A673 (cell line): ENCODE measurements at regions of chr2 and their contacts with region 1.

Region 1: DNA sequence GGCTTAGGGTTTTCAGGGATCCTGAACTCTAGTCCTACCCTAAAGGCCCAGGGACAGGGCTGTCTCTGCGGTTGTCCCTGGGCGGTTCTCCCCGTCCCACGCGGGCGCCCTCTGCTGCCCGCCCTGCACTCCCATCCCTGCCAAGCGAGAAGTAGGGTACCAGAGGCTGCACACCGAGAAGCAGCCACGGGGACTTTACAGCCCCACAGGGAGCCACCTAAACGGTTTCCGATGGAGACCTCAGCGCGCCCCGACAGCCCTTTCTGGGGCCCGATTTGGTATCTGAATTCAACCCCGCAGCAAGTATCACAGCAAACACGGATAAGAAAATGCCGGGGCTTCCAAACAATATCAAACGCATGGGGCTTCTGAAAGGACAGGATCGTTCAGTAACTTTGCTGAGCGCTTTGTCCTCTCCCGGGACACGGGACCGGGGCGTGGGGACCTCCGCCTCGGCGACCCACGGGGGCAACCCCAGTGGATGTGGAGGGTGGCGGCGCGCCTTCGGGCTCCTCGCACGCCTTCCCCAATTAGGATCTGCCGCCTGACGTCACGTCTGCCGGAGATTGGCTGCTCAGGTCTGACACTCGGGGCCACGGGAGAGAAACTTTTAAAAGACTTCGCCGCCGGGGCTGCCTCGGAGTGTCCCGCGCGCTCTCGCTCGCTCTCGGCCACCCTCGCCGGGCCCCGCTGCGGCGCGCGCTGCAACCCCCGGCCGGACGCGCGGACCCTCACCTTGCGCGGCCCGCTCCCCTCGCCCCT is at the start of gene LTBP1:
- DNase-seq: peak; percentile 78
- H3K4me3 ChIP-seq: peak within 1 kb of the TSS; percentile 54
- H3K27ac ChIP-seq: no peak within 1 kb of the TSS
- H3K4me1 ChIP-seq: peaks cover 4% of the 10 kb centered on the region
- H3K27me3 ChIP-seq: peaks cover 43% of the 10 kb centered on the region
- CTCF ChIP-seq: peak; percentile 92
- total RNA-seq, gene LTBP1: 2.2 and 2.3 TPM in 2 replicates

Region 2: DNA sequence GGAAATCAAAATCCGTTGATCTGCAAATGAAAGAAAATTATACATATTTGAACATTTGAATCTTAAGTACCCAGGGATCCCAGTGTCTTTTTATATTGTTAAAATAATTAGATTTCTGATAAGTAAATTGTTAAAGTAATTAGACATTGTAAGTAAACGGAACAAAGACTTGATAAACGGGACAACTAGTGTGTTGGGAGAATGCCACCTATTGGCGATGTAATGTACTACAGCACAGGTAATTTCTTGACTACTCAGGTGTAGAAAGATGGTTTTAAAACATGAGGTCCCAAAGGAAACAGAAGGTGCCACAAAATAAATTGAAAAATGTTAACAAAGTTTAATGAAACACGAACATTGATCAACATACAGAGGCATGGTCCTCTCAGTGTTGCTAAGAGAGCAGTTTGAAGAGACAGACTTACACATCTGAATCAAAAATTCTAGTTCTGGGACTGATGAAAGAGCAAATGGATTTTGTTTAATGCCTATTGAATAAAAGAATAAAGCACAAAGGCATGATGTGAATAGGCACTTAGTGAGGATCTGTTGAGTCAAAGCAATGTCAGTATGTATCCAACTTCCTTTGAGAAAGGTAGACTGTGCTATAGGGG is 426.6 kb after region 1 on chr2:
- CTCF ChIA-PET with region 1: no interaction called
- POLR2A ChIA-PET with region 1: no interaction called
- intact Hi-C with region 1: loop called (anchors 10 kb)
- DNase-seq: peak; percentile 32
- H3K4me3 ChIP-seq: no peak overlapping the region
- H3K27ac ChIP-seq: no peak overlapping the region
- H3K4me1 ChIP-seq: no peaks in the 10 kb centered on the region
- H3K27me3 ChIP-seq: no peaks in the 10 kb centered on the region
- CTCF ChIP-seq: peak; percentile 85